ENCODE measurements at regions of chr10 and their contacts with region 1.

Region 1: DNA sequence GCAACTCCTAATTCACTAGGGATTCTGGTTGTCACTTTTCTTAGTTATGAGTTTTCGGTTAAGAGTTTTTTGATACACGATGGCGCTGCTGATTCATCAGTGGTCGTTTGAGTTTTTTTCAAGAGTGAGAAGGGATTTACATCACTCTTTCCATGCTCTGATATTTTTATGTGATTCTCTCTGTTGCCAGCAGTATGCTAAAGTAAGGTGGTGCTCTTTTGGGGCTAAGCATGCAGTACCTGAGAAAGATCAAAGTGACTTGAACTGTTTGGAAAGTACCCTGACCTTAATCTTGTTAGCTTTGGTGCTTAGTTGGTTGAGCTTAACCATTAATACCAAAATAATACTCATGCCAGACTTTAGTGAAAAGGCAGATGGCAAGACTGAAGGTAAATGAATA is 28.1 kb downstream of the STAMBPL1 start:
- DNase-seq: peak; percentile 34
- ATAC-seq: peak; percentile 89
- H3K4me3 Mint-ChIP-seq: peak overlapping the region; percentile 24
- H3K27ac Mint-ChIP-seq: peak overlapping the region; percentile 69
- H3K4me1 Mint-ChIP-seq: peaks cover 22% of the 10 kb centered on the region
- H3K27me3 Mint-ChIP-seq: no peaks in the 10 kb centered on the region

Region 2: GRCh38 chr10:88886557-88886956 is 21.6 kb before region 1 on chr10:
- CTCF ChIA-PET with region 1: interaction called, 4 read pairs
- POLR2A ChIA-PET with region 1: no interaction called
- intact Hi-C with region 1: loop called in 1 of 2 experiments (anchors 2 kb)
- DNase-seq: peak; percentile 49
- ATAC-seq: peak; percentile 93
- H3K4me3 Mint-ChIP-seq: no peak overlapping the region
- H3K27ac Mint-ChIP-seq: no peak overlapping the region
- H3K4me1 Mint-ChIP-seq: peaks cover 86% of the 10 kb centered on the region
- H3K27me3 Mint-ChIP-seq: no peaks in the 10 kb centered on the region

Measured in activated CD4-positive, alpha-beta T cell treated with anti-CD3 and anti-CD28 coated beads for 36 hours (primary cell).